ENCODE measurements at regions of chr2 and their contacts with region 1.

Region 1: GRCh38 chr2:230885463-230886130 is 20.9 kb downstream of the ITM2C start:
- DNase-seq: peak in 1 of 2 experiments; percentile 68
- H3K4me3 ChIP-seq: no peak overlapping the region
- H3K27ac ChIP-seq: no peak overlapping the region
- H3K4me1 ChIP-seq: peaks cover 5 to 9% (median 7%) of the 10 kb centered on the region in 4 experiments
- H3K27me3 ChIP-seq: no peaks in the 10 kb centered on the region
- CTCF ChIP-seq: no peak
- EP300 ChIP-seq: no peak
- POLR2A ChIP-seq: no peak
- RAD21 ChIP-seq: no peak

Region 2: GRCh38 chr2:230873476-230874451 is 11.8 kb before region 1 on chr2:
- CTCF ChIA-PET with region 1: interaction called, 8 read pairs
- POLR2A ChIA-PET with region 1: interaction called, 15 read pairs
- DNase-seq: peak in 1 of 2 experiments; percentile 41
- H3K4me3 ChIP-seq: no peak overlapping the region
- H3K27ac ChIP-seq: no peak overlapping the region; the same call in 1 of the 2 replicates
- H3K4me1 ChIP-seq: peaks cover 17 to 33% (median 30%) of the 10 kb centered on the region in 4 experiments
- H3K27me3 ChIP-seq: no peaks in the 10 kb centered on the region
- CTCF ChIP-seq: no peak
- EP300 ChIP-seq: no peak
- POLR2A ChIP-seq: no peak
- RAD21 ChIP-seq: no peak

Region 3: DNA sequence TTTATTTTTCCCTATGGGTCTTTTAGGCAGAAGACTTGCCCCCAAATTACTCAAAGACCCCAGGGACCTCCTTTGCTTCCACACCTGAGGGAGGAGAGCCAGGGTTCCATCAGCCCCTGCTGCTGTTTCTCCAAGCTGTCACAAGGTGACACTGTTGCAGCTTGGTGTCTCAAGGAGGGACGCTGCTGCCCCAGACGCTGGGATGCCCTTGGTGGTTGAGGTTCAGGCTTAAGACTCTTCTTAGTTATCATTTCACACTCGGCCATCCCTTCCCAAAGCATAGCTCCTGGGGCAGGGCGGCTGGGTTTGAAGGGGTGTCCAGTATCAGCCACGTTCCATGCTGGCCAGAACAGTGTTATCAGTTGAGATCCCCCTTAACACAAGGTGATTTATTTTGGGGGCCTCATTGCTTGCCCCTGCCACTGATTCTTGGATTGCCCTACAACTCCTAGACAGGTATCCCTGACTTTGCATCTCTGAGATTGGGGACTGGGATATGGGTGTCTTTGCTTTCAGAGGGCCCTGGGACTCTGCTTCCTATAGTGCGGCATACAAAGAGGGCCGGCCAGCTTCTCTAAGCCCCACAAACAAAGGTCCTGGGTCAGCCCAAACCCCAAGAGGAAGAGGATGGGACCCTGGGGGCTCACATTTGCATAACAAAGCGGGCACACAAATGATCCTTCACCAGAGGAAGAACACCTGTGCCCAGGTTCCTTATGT is 16.7 kb after region 1 on chr2:
- CTCF ChIA-PET with region 1: interaction called, 30 read pairs
- POLR2A ChIA-PET with region 1: interaction called, 5 read pairs
- DNase-seq: peak; percentile 51 to 78
- H3K4me3 ChIP-seq: peak overlapping the region in 2 of 4 experiments; percentile 42 to 46; a peak in 3 of 8 replicates
- H3K27ac ChIP-seq: peak overlapping the region; percentile 75
- H3K4me1 ChIP-seq: peaks cover 7 to 32% (median 18%) of the 10 kb centered on the region in 4 experiments
- H3K27me3 ChIP-seq: peaks cover 0 to 13% (median 0%) of the 10 kb centered on the region in 4 experiments; a peak in 3 of 7 replicates
- CTCF ChIP-seq: peak; percentile 90 to 97 (median 91)
- EP300 ChIP-seq: peak in 1 of 2 experiments; percentile 67; a peak in 1 of 3 replicates
- POLR2A ChIP-seq: peak in 1 of 2 experiments; percentile 31; a peak in 1 of 3 replicates
- RAD21 ChIP-seq: peak; percentile 91 to 94

Measured in H1 (cell line).